ENCODE measurements at regions of chr5 and their contacts with region 1.

Region 1: GRCh38 chr5:136249678-136250266 is 56.8 kb upstream of the SMIM32 start:
- DNase-seq: peak; percentile 68
- H3K27ac ChIP-seq: no peak overlapping the region
- CTCF ChIP-seq: peak; percentile 93

Region 2: DNA sequence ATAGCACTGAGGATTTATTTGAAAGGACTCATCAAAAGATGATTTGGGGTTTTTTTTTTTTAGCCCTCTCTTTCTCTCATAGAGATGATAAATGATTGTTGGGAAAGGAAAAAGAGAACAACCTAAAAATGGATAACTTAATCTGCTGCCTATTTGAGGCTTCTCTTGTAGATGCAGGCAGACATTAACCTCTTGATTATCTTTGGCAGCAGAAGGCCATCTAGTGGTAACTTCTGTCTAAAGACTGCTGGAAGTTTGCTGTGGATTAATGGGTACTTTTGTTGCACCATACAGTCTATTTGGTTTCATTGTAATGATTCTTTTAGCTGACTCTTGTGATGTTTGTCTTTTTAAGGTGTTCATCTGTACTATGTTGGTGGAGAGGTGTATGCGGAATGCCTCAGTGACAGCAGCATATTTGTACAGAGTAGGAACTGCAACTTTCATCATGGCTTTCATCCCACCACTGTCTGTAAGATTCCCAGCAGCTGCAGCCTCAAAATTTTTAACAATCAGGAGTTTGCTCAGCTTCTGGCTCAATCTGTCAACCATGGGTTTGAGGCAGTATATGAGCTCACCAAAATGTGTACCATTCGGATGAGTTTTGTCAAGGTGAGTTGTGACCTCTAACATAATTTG is 75.6 kb before region 1 on chr5:
- CTCF ChIA-PET with region 1: no interaction called
- POLR2A ChIA-PET with region 1: no interaction called
- DNase-seq: peak; percentile 68
- H3K27ac ChIP-seq: no peak overlapping the region
- CTCF ChIP-seq: peak; percentile 81

Region 3: GRCh38 chr5:136769900-136770684 is 520.3 kb after region 1 on chr5:
- CTCF ChIA-PET with region 1: interaction called, 42 read pairs
- POLR2A ChIA-PET with region 1: no interaction called
- DNase-seq: peak; percentile 85
- H3K27ac ChIP-seq: no peak overlapping the region
- CTCF ChIP-seq: peak; percentile 86